ENCODE measurements at regions of chr9 and their contacts with region 1.

Region 1: DNA sequence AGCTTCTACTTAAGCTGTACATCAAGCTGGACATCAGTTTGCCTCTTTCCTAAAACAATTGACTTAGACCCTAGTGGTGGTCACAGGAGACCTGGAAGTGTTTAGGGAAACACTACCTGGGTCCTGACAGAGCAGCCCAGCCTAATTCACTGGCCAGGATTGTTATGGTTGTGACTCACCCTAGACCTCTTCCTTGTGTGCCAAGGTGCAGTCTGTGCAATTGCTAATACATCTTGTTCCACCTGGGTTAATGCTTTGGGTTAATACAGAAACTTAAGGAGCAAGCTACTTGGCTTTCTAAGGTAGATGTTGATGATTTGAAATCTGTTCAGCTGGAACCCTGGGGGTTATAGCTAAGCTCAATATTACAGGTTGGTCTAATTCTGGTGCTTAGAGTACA is 48.7 kb upstream of the SLC46A2 start:
- DNase-seq: no peak
- H3K4me3 ChIP-seq: no peak overlapping the region
- H3K27ac ChIP-seq: no peak overlapping the region
- H3K4me1 ChIP-seq: no peaks in the 10 kb centered on the region
- H3K27me3 ChIP-seq: peaks cover 0 to 7% of the 10 kb centered on the region in 2 donors
- CTCF ChIP-seq: no peak

Region 2: GRCh38 chr9:112680731-112681402 is 258.6 kb before region 1 on chr9:
- intact Hi-C with region 1: no loop called
- DNase-seq: no peak
- H3K4me3 ChIP-seq: no peak overlapping the region
- H3K27ac ChIP-seq: no peak overlapping the region
- H3K4me1 ChIP-seq: no peaks in the 10 kb centered on the region
- H3K27me3 ChIP-seq: no peaks in the 10 kb centered on the region
- CTCF ChIP-seq: no peak

Region 3: GRCh38 chr9:112809351-112809848 is 130.0 kb before region 1 on chr9:
- intact Hi-C with region 1: no loop called
- DNase-seq: no peak
- H3K4me3 ChIP-seq: no peak overlapping the region
- H3K27ac ChIP-seq: no peak overlapping the region
- H3K4me1 ChIP-seq: peaks cover 0 to 14% (median 0%) of the 10 kb centered on the region in 4 donors
- H3K27me3 ChIP-seq: no peaks in the 10 kb centered on the region
- CTCF ChIP-seq: no peak

Region 4: DNA sequence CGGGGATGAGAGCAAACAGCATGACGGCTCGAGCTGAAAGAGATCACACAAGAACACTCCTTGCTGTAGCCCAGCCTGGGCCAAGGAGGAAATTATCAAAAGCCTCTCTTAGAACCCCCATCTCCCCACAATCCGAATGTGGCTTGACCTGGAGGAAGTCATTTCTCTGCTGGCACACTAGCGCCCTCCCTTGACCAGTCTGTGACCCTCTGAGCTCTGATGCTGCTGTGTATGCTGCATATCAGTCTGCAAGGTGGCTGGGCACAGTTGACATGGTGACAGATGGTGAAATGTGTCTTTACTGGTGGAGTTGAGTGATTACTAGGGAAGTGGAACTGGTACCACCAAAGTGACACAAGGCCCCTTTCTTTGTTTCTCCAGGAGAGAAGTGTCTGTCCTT is 52.0 kb before region 1 on chr9:
- intact Hi-C with region 1: no loop called
- DNase-seq: no peak
- H3K4me3 ChIP-seq: no peak overlapping the region
- H3K27ac ChIP-seq: no peak overlapping the region
- H3K4me1 ChIP-seq: peaks cover 0 to 15% (median 12%) of the 10 kb centered on the region in 4 donors
- H3K27me3 ChIP-seq: peaks cover 0 to 17% of the 10 kb centered on the region in 2 donors
- CTCF ChIP-seq: no peak

Region 5: GRCh38 chr9:113011911-113012381 is 72.5 kb after region 1 on chr9 and contains the start of gene ZNF883:
- intact Hi-C with region 1: no loop called
- DNase-seq: no peak
- H3K4me3 ChIP-seq: peak within 1 kb of the TSS; percentile 33 to 43
- H3K27ac ChIP-seq: no peak within 1 kb of the TSS
- H3K4me1 ChIP-seq: peaks cover 0 to 3% (median 0%) of the 10 kb centered on the region in 4 donors
- H3K27me3 ChIP-seq: no peaks in the 10 kb centered on the region
- CTCF ChIP-seq: no peak

Region 6: DNA sequence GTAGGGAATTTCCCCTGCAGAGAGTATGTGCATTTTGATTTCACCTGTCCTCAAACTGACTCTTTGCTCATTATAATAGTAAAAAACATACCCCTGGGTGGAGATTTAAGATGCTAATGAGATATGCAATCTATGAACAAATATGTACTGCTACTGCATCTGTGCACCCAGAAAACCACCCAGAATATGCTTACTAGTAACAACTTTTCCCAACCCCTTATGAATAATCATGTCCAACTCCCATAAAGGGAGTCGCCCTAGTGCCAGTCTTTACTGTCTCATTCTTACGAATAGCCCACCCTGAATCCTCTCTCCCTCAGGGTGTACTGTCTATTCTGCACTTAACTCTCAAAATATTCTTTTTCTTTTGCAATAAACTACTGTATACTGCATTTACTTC is 156.1 kb after region 1 on chr9:
- intact Hi-C with region 1: loop called (anchors 10 kb)
- DNase-seq: no peak
- H3K4me3 ChIP-seq: no peak overlapping the region
- H3K27ac ChIP-seq: no peak overlapping the region
- H3K4me1 ChIP-seq: no peaks in the 10 kb centered on the region
- H3K27me3 ChIP-seq: peaks cover 0 to 71% of the 10 kb centered on the region in 2 donors
- CTCF ChIP-seq: no peak

Measured in tibial artery (tissue), 4 donors.